ENCODE measurements at regions of chr3 and their contacts with region 1.

Region 1: GRCh38 chr3:126704463-126705214 is 599 bp downstream of the CHCHD6 start:
- DNase-seq: no peak
- H3K4me3 ChIP-seq: peak overlapping the region; percentile 81
- CTCF ChIP-seq: no peak
- POLR2A ChIP-seq: no peak

Region 2: DNA sequence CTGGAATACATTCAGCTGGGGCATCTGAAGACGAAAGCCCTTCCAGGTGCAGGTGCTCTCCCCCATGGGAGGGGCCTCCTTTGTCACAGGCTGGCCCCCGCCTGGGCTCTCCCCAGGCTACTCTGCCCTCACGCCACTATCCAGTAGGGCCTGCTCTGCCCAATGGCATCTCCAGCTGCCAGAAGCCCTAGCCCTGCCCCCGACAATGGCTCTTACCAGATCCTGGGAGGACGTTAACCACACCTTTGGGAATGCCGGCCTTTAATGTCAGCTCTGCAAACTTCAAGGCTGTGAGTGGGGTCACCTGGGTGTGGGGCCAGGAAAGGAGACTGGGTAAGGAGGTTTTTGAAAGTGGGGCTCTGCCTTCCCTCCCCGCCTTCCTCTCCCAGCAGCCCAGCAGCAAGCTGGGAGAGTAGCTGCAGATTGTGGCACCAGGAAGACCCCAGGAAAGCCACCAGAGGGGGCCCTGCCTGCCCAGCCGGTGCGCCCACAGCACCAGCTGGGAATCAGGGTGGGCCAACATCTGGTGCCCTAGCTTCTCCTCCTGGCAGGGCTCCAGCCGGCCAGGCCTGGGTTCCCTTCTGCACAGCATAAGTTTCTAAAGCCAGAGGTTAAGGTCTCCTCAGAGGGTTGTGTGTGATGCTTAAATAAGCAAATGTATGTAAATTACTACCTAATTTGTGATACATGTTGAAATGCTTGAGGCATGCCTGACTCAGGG is 580.3 kb before region 1 on chr3:
- intact Hi-C with region 1: loop called (anchors 5 kb)
- DNase-seq: peak in 1 of 2 donors; percentile 74
- H3K4me3 ChIP-seq: no peak overlapping the region
- CTCF ChIP-seq: no peak
- POLR2A ChIP-seq: no peak

Region 3: DNA sequence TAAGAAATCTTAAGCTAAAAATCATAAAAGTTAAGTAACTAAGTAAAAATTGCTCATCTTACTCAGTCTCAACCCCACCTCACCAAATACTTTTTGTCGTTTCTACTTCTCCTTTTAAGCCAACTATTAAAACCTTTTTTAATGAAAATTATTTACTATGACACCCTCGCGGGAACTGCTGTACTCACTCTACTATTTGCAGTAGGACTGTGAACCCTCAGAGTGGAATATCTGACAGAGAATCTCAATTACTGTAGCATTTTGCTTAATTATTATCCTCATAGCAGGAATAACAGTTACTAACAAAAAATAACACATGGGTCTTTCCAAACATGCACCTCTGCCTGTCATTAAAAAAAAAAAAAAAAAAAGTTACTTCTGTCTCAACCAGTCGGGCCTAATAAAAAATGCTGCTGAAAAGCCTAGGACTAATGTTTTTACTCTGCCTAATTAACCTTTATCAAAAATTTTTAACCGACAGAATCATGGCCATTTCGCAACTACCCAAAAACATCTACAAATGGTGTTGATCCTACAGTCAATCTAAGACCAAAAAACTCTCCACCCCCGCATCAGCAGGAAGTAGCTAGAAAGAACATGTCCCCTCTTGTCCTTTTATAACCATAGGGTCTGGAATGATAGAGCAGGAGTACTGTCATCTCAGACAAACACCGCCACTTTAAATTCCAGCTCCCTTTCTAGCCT is 534.4 kb before region 1 on chr3:
- intact Hi-C with region 1: no loop called
- DNase-seq: no peak
- H3K4me3 ChIP-seq: no peak overlapping the region
- CTCF ChIP-seq: no peak
- POLR2A ChIP-seq: no peak

Region 4: GRCh38 chr3:126765187-126766069 is 60.8 kb after region 1 on chr3:
- intact Hi-C with region 1: no loop called
- DNase-seq: peak in 1 of 2 donors; percentile 78
- H3K4me3 ChIP-seq: no peak overlapping the region
- CTCF ChIP-seq: no peak
- POLR2A ChIP-seq: no peak